ENCODE measurements at regions of chr1 and their contacts with region 1.

Region 1: DNA sequence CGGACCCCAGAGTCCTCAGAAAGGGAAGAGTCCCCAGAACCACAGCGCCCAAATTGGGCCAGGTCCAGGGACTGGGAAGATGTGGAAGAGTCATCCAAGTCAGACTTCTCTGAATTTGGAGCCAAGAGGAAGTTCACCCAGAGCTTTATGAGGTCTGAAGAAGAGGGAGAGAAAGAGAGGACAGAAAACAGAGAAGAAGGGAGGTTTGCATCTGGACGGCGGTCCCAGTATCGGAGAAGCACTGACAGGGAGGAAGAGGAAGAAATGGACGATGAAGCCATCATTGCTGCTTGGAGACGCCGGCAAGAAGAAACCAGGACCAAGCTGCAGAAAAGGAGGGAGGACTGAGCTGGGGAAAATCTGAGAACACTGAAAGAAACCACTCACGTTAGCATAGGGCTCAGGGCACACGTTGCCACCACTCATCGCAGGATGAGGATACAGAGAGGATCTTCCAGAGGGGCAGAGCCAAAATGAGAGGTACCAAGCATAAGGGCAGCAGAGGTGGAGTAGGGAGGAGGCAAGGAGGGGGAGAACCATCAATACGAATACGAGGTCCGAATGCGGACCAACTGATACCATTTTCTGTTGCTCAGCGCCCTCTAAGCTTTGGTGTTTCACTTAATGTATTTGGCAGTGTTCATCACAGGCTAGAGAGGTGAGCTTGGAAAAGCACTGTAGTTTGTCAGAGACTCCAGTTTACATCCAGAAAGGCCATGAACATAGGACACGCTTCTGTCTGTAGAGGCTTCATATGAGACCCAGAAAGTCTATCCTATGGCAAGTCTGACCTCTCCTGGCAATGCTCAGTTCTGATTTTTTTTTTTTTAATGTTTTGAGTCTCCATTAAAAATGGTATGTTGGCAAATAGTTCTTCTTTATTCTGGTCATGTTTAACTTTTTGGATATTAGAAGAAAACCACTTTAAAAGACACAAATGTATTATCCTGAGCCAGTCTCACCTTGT is 34.7 kb downstream of the STYXL2 start:
- DNase-seq: no peak
- H3K4me3 ChIP-seq: no peak overlapping the region
- H3K27ac ChIP-seq: no peak overlapping the region
- H3K27me3 ChIP-seq: peaks cover 0 to 7% (median 0%) of the 10 kb centered on the region in 45 donors
- CTCF ChIP-seq: peak in 20 of 56 donors; percentile 8 to 53 (median 22)

Region 2: GRCh38 chr1:166988976-166989567 is 139.5 kb before region 1 on chr1 and contains the start of gene MAEL:
- intact Hi-C with region 1: no loop called
- DNase-seq: no peak
- H3K4me3 ChIP-seq: no peak within 1 kb of the TSS
- H3K27ac ChIP-seq: no peak within 1 kb of the TSS
- H3K27me3 ChIP-seq: no peaks in the 10 kb centered on the region
- CTCF ChIP-seq: no peak
- total RNA-seq, gene MAEL: 0.72 to 9.1 (median 3.5) TPM

Region 3: GRCh38 chr1:167066333-167067122 is 62.0 kb before region 1 on chr1:
- intact Hi-C with region 1: loop called (anchors 2 to 5 kb)
- DNase-seq: peak; percentile 60 to 89 (median 78)
- H3K4me3 ChIP-seq: peak overlapping the region in 54 of 59 donors; percentile 7 to 66 (median 42)
- H3K27ac ChIP-seq: peak overlapping the region in 6 of 59 donors; percentile 0 to 67 (median 42)
- H3K27me3 ChIP-seq: no peaks in the 10 kb centered on the region
- CTCF ChIP-seq: peak; percentile 68 to 100 (median 97)

Region 4: DNA sequence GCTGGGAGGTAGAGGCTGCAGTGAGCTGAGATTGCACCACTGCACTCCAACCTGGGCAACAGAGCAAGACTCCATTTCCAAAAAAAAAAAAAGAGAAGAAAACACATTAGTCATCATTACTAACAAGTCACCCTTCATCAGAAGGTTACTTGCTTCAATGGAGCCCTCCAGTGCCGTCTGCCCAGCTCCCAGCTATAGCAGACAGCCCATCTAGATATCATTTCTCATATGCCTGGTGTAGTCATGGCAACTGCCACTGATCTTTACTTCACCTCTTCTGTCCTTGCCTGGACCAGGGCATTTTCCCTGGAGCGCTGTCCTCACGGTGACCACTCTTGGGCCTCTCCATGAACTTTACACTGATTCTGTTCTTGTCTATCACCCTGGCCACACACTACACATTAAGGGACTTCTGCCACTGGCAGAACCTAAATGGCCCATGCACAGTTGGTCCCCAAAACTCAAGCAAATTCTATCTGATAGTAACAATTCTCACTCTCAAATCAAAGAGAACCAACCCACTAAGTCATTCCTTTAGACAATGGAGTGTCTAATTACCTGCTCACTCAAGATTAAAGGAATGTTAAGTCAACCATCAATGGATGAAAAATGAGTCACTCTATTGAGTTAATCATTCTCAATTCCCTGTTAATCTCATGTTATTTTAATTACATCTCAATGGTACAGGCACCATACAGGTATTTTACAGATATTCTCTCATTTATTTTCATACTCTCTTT is 51.2 kb before region 1 on chr1:
- intact Hi-C with region 1: no loop called
- DNase-seq: no peak
- H3K4me3 ChIP-seq: no peak overlapping the region
- H3K27ac ChIP-seq: no peak overlapping the region
- H3K27me3 ChIP-seq: peaks cover 0 to 19% (median 0%) of the 10 kb centered on the region in 45 donors
- CTCF ChIP-seq: no peak

Measured in dorsolateral prefrontal cortex (tissue), 120 donors.